ENCODE measurements at regions of chr2 and their contacts with region 1.

Region 1: GRCh38 chr2:110157153-110157793 is 41.7 kb upstream of the MALL start:
- DNase-seq: peak; percentile 8
- ATAC-seq: peak; percentile 86
- H3K4me3 ChIP-seq: no peak overlapping the region
- H3K27ac ChIP-seq: no peak overlapping the region
- H3K4me1 ChIP-seq: no peaks in the 10 kb centered on the region
- H3K27me3 ChIP-seq: no peaks in the 10 kb centered on the region; a peak in 1 of 4 replicates
- CTCF ChIP-seq: peak; percentile 66 to 76 (median 73)
- EP300 ChIP-seq: no peak
- POLR2A ChIP-seq: no peak
- RAD21 ChIP-seq: peak; percentile 78

Region 2: GRCh38 chr2:110167326-110168000 is 10.2 kb after region 1 on chr2:
- CTCF ChIA-PET with region 1: interaction called, 14 read pairs
- POLR2A ChIA-PET with region 1: no interaction called
- RAD21 ChIA-PET with region 1: no interaction called
- SMC1A ChIA-PET with region 1: interaction called, 3 read pairs
- in situ Hi-C with region 1: no loop called
- intact Hi-C with region 1: no loop called
- DNase-seq: no peak
- ATAC-seq: no peak
- H3K4me3 ChIP-seq: no peak overlapping the region
- H3K27ac ChIP-seq: no peak overlapping the region
- H3K4me1 ChIP-seq: no peaks in the 10 kb centered on the region
- H3K27me3 ChIP-seq: no peaks in the 10 kb centered on the region
- CTCF ChIP-seq: no peak
- EP300 ChIP-seq: no peak
- POLR2A ChIP-seq: no peak
- RAD21 ChIP-seq: no peak

Region 3: GRCh38 chr2:111698743-111699554 is 1541.7 kb after region 1 on chr2:
- CTCF ChIA-PET with region 1: no interaction called
- POLR2A ChIA-PET with region 1: no interaction called
- RAD21 ChIA-PET with region 1: no interaction called
- SMC1A ChIA-PET with region 1: no interaction called
- in situ Hi-C with region 1: loop called (anchors 25 kb)
- intact Hi-C with region 1: no loop called
- DNase-seq: no peak
- ATAC-seq: peak; percentile 81
- H3K4me3 ChIP-seq: no peak overlapping the region
- H3K27ac ChIP-seq: no peak overlapping the region
- H3K4me1 ChIP-seq: peaks cover 3% of the 10 kb centered on the region; the same call in 1 of the 2 replicates
- H3K27me3 ChIP-seq: 0 out of 4 replicates have a peak, but pooled peaks cover 0 to 2% of the 10 kb centered on the region in 2 experiments
- CTCF ChIP-seq: peak in 2 of 3 experiments; percentile 16 to 43; a peak in 4 of 6 replicates
- EP300 ChIP-seq: no peak
- POLR2A ChIP-seq: no peak
- RAD21 ChIP-seq: peak; percentile 34; the same call in 1 of the 2 replicates

Measured in GM12878 (cell line).